Activated CD4-positive, alpha-beta T cell treated with anti-CD3 and anti-CD28 coated beads, Interleukin-2, amount 10 ng/mL, durations not matched to agents 24 days and 14 days (primary cell): ENCODE measurements at regions of chr1 and their contacts with region 1.

Region 1: DNA sequence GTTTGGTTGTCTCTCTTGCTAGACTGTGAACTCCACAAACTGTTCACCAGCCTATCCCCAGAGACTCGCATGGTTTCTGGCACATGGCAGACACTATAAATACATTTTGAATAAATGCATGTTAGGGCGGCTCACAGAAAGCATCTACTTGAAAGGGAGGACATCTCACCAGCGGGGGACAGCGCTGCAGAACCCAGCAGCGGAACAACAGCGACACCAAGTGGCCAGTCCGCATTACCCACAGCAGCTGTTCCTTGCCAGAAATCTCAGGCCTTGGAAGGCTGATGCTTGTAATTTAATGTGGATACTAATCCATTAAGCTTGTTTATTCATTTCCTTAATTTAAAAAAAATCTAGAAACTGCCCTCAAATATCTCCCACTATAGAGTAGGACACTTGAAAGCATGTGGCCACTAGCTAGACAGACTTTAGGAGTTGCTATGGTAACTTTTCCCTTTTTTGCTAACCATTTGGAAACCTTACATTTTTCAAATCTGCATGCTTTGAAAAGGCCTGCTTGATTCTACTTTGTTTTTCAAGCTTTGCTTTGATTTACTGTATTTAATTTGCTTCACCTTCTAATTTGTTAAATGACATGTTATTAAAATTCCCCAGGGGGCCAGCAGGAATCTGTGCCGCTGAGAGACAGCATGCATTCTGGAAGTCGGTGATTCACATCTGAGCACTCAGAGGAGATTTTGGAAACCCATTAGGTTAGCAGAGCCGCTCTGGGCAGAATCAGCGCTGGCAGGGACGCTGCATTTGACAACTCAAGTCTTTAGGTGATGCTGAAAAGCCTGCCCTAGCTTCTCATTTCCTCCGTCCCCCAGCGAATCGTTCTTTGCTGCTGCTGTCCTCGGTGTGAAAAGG is 63.5 kb upstream of the SSX2IP start:
- DNase-seq: peak; percentile 92
- H3K4me3 Mint-ChIP-seq: no peak overlapping the region
- H3K27ac Mint-ChIP-seq: no peak overlapping the region
- H3K4me1 Mint-ChIP-seq: peaks cover 3% of the 10 kb centered on the region
- H3K27me3 Mint-ChIP-seq: peaks cover 31% of the 10 kb centered on the region

Region 2: DNA sequence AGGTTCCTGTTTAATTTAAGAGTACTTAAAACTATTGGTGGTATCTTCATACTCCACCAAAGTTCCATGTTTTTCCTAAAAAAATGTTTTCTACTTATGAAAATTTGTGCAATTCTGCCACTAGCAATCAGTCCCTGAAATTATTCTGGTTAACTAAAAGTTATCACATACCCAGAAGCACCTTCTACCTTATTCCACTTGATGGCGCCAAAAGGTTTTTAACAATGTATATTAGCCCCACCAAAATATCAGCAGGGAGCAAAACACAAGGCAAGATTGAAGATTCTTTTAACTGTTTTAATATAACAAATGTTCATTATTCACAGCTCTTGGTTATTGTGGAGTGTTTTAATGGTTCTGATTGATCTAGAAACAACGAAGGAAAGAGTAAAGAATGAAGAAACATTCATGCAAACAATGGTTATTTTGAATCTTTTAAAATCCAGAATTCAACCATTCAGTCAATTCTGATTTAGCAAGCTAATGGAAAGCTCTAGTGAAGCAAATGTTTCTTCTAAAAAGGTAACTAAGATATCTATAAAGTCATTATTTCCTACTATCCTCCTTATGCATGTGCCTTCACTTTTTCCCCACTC is 822.0 kb before region 1 on chr1:
- intact Hi-C with region 1: loop called (anchors 5 kb)
- DNase-seq: peak; percentile 76
- H3K4me3 Mint-ChIP-seq: no peak overlapping the region
- H3K27ac Mint-ChIP-seq: no peak overlapping the region
- H3K4me1 Mint-ChIP-seq: no peaks in the 10 kb centered on the region
- H3K27me3 Mint-ChIP-seq: peaks cover 27% of the 10 kb centered on the region

Region 3: DNA sequence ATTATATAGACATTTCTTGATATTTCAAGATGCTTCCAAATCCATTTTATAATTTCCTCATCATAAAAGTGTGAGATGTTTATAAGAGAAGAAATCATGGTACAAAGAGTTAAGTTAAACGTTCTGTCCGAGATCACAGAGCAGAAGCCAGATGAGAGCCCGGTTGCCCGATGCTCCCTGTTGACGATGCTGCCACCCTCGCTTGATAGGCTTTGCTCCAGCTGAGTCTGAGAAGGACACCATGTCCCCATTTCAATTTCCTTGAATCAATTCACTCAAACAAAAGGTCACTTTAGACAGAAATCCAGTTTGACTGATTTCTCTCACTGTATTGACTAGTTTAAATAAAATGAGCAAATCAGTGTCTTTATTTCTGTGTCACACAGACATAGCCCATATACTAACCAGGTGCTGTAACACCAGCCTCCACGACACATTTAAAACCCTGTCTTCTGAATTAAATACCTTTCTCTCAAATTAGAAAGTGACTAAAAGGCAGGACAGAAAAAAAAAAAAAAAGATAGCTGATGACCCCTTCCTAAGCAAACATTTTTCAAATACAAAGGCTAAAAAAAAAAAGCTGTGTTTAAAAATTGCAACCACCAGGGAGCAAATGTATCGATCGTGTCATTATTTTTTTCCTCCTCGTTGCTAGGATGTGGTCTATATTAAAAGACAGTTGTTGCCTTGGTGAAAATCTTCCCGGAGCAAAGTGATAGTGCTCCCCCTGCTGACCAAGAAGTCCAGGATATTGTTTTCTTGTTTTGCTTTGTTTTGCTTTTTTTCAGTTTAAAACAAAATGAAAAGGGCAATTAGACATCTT is 320.3 kb before region 1 on chr1:
- intact Hi-C with region 1: loop called (anchors 2 kb)
- DNase-seq: peak; percentile 90
- H3K4me3 Mint-ChIP-seq: peak overlapping the region; percentile 63
- H3K27ac Mint-ChIP-seq: peak overlapping the region; percentile 40
- H3K4me1 Mint-ChIP-seq: peaks cover 6% of the 10 kb centered on the region
- H3K27me3 Mint-ChIP-seq: peaks cover 2% of the 10 kb centered on the region

Region 4: DNA sequence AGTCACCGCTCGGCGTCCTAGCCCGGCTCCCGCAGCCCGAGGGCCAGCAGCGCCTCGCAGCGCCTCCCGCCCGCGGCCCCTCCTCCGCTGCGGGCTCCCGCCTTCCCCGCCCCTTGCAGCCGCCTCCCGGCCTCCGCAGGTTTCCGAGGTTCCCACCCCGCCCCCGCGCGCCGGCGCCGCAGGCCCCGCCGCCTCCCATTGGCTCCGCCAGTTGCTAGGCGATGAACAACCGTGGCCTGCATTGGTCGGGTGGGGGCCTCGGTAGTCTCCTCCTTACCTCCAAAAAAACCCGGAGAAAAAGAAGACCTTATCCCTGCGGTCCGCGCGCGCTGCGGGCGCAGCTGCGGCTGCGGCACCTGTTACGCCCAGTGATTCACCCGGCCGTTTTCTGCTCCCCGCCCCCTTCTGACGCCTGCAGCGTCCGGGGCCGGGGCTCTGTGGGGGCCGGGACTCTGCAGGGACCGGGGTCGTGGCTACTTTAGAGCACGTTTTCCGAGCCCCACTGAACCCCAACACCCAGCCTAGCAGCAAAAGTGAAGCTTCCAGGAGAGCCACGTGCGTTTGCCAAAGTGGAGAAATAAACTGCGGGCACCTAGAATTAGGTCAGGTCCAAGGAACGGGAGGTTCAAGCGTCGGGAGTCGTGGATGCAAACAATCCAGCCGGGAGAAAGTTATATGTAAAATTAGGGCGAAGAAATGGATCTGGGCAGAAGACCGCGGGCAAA is 63.2 kb before region 1 on chr1 and contains the start of gene SSX2IP:
- intact Hi-C with region 1: loop called (anchors 2 kb)
- DNase-seq: peak; percentile 100
- H3K4me3 Mint-ChIP-seq: peak within 1 kb of the TSS; percentile 98
- H3K27ac Mint-ChIP-seq: peak within 1 kb of the TSS; percentile 95
- H3K4me1 Mint-ChIP-seq: peaks cover 43% of the 10 kb centered on the region
- H3K27me3 Mint-ChIP-seq: peaks cover 4% of the 10 kb centered on the region
- total RNA-seq, gene SSX2IP: 10.0 and 11.8 TPM in 2 replicates

Region 5: DNA sequence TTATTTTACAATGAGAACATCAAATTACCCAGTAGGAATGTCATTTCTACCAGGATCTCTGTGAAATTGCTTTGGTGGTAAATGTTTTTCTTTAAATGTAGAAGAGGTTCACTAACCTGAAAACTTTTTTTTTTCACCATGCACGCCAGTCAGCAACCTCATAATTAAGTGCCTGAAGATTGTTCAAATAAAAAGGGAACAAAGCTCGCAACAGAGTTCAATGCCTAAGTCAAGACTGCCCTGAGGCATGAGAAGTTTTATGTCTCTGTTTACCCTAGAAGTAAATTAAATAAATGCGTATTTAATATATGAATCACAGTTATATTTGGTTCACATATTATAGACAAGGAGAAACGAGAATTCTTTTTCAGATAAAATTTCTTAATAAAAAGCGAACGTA is 460.9 kb after region 1 on chr1:
- intact Hi-C with region 1: no loop called
- DNase-seq: no peak
- H3K4me3 Mint-ChIP-seq: no peak overlapping the region
- H3K27ac Mint-ChIP-seq: no peak overlapping the region
- H3K4me1 Mint-ChIP-seq: no peaks in the 10 kb centered on the region
- H3K27me3 Mint-ChIP-seq: peaks cover 36% of the 10 kb centered on the region